Heart left ventricle (tissue), 16 donors: ENCODE measurements at regions of chr12 and their contacts with region 1.

Region 1: DNA sequence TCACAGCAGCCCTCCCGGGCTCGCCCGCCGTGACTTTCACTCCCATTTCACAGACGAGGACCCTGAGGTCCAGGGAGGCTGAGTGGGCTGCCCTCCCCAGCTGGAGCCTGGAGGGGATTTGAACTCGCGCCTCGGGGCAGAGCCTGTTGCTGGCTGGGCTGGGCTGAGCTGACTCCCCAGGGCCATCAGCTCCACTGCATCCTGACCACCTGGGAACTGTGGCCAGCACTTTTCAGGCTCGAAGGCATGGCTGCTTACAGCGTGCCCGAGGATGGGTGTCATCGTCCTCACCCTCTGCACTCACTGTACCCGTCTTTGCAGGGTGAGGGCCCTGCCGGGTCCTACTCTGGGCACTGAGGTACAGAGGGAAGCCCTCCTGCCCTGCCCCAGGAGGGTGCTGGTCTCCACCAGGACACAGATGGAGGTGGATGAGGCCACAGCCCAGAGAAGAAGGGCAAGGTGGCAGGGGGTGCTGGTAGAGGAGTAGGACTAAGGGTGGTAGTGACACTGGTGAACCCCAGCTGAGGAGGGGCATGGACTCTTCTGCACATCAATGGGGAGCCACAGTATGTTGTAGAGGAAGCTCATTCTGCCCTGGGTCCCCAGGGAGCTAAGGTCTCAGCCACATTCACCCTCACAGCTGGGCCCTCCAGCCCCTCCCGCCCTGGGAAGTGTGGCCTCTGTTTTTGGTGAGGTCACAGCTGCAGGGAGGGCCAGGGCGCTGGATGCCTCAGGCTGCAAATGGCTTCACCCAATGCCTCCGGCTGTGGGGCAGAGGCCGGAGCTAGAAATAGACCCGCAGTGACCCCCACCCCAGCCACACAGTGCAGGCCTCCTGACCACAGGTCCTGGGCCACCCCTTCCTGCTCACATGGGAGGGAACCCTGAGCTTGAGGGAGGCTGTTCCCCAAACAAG is 365.1 kb upstream of the SFSWAP start:
- DNase-seq: peak in 1 of 5 donors; percentile 63
- ATAC-seq: peak in 2 of 4 donors; percentile 17 to 29
- H3K4me3 ChIP-seq: no peak overlapping the region
- H3K27ac ChIP-seq: no peak overlapping the region
- H3K4me1 ChIP-seq: no peaks in the 10 kb centered on the region
- H3K27me3 ChIP-seq: peaks cover 0 to 29% (median 0%) of the 10 kb centered on the region in 9 donors
- CTCF ChIP-seq: no peak
- POLR2A ChIP-seq: no peak

Region 2: GRCh38 chr12:131242741-131243496 is 102.9 kb before region 1 on chr12:
- intact Hi-C with region 1: loop called in 1 of 10 experiments (anchors 2 kb)
- DNase-seq: peak in 2 of 5 donors; percentile 3 to 5
- ATAC-seq: no peak
- H3K4me3 ChIP-seq: no peak overlapping the region
- H3K27ac ChIP-seq: no peak overlapping the region
- H3K4me1 ChIP-seq: no peaks in the 10 kb centered on the region
- H3K27me3 ChIP-seq: peaks cover 0 to 10% (median 0%) of the 10 kb centered on the region in 9 donors
- CTCF ChIP-seq: no peak
- POLR2A ChIP-seq: no peak

Region 3: DNA sequence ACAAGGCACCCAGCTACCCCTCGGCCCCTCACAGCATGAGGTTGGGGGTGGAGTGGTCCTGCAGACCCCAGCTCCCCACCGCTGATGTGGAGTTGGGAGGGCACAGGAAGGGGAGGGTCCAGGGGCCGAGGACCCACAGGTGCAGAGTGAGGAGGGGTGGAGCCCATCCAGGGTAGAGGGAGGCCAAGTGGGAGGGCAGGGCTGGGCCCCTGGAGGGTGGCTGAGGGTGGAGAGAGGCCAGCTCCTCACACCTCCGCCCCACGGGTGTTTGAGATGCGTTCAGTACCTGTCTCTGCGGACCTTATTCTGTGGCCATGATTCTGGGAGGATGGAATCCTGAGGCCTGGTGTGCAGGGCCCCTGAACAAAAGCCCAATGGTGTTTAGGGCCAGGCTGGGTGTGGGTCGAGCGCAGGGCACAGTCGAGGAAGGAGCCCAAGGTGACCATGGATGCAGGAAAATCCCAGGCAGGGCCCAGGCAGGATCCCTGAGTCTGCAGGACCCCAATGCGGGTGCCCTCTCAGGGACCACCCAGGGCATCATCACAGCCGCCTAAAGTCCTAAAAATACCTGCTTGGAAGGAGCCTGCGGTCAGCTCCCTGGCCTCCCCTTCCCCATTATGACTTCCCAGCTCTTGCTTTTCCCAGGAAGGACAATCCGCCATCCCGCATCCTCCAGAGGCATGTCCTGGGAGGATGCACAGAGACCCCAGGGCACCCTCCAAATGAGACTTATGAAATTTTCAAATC is 12.0 kb before region 1 on chr12:
- intact Hi-C with region 1: no loop called
- DNase-seq: no peak
- ATAC-seq: peak in 1 of 4 donors; percentile 27
- H3K4me3 ChIP-seq: no peak overlapping the region
- H3K27ac ChIP-seq: no peak overlapping the region
- H3K4me1 ChIP-seq: no peaks in the 10 kb centered on the region
- H3K27me3 ChIP-seq: no peaks in the 10 kb centered on the region
- CTCF ChIP-seq: no peak
- POLR2A ChIP-seq: no peak

Region 4: GRCh38 chr12:131621701-131622421 is 276.1 kb after region 1 on chr12:
- intact Hi-C with region 1: loop called in 3 of 10 experiments (anchors 2 to 5 kb)
- DNase-seq: peak in 2 of 5 donors; percentile 25 to 32
- ATAC-seq: peak in 2 of 4 donors; percentile 21 to 28
- H3K4me3 ChIP-seq: no peak overlapping the region
- H3K27ac ChIP-seq: no peak overlapping the region
- H3K4me1 ChIP-seq: peaks cover 0 to 15% (median 2%) of the 10 kb centered on the region in 12 donors
- H3K27me3 ChIP-seq: peaks cover 0 to 54% (median 13%) of the 10 kb centered on the region in 9 donors
- CTCF ChIP-seq: no peak
- POLR2A ChIP-seq: no peak